Left ventricle myocardium inferior (tissue), 1 donor: ENCODE measurements at regions of chr19 and their contacts with region 1.

Region 1: DNA sequence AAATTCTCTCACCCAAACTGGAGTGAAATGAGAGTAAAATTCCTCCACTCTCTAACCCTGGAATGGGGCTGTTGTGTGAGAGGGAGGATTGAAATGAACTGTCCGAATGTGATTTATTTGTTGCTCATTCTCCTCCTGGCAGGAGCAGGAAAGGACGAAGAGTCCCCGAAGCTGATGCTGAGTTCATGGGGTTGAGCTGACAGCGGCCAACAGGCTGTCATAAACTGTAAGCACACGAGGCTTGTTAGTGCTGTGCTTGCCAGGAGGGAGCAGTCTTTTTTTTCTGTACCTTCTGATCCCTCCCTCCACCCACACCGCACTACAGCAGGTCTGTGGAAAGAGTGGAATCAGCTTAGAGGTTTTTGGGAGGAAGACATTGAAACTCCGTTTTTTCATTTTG is 33.1 kb upstream of the ZNF331 start:
- DNase-seq: no peak
- H3K4me3 ChIP-seq: peak overlapping the region; percentile 51
- H3K27ac ChIP-seq: peak overlapping the region; percentile 42
- H3K4me1 ChIP-seq: peaks cover 8% of the 10 kb centered on the region
- H3K27me3 ChIP-seq: peaks cover 65% of the 10 kb centered on the region
- CTCF ChIP-seq: no peak

Region 2: GRCh38 chr19:53431399-53432087 is 73.3 kb before region 1 on chr19 and contains the start of gene ZNF761:
- intact Hi-C with region 1: loop called (anchors 10 kb)
- DNase-seq: peak; percentile 95
- H3K4me3 ChIP-seq: peak within 1 kb of the TSS; percentile 90
- H3K27ac ChIP-seq: peak within 1 kb of the TSS; percentile 74
- H3K4me1 ChIP-seq: peaks cover 28% of the 10 kb centered on the region
- H3K27me3 ChIP-seq: no peaks in the 10 kb centered on the region
- CTCF ChIP-seq: peak; percentile 66
- total RNA-seq, gene ZNF761: 3.3 TPM

Region 3: GRCh38 chr19:53463263-53463662 is 41.6 kb before region 1 on chr19:
- intact Hi-C with region 1: no loop called
- DNase-seq: peak; percentile 41
- H3K4me3 ChIP-seq: peak overlapping the region; percentile 23
- H3K27ac ChIP-seq: no peak overlapping the region
- H3K4me1 ChIP-seq: peaks cover 16% of the 10 kb centered on the region
- H3K27me3 ChIP-seq: peaks cover 21% of the 10 kb centered on the region
- CTCF ChIP-seq: no peak